ENCODE measurements at regions of chr5 and their contacts with region 1.

Region 1: GRCh38 chr5:168249923-168250322 is 41.5 kb upstream of the WWC1 start:
- DNase-seq: no peak
- ATAC-seq: no peak
- H3K4me3 Mint-ChIP-seq: no peak overlapping the region
- H3K27ac Mint-ChIP-seq: no peak overlapping the region
- H3K4me1 Mint-ChIP-seq: peaks cover 14% of the 10 kb centered on the region
- H3K27me3 Mint-ChIP-seq: peaks cover 2% of the 10 kb centered on the region

Region 2: DNA sequence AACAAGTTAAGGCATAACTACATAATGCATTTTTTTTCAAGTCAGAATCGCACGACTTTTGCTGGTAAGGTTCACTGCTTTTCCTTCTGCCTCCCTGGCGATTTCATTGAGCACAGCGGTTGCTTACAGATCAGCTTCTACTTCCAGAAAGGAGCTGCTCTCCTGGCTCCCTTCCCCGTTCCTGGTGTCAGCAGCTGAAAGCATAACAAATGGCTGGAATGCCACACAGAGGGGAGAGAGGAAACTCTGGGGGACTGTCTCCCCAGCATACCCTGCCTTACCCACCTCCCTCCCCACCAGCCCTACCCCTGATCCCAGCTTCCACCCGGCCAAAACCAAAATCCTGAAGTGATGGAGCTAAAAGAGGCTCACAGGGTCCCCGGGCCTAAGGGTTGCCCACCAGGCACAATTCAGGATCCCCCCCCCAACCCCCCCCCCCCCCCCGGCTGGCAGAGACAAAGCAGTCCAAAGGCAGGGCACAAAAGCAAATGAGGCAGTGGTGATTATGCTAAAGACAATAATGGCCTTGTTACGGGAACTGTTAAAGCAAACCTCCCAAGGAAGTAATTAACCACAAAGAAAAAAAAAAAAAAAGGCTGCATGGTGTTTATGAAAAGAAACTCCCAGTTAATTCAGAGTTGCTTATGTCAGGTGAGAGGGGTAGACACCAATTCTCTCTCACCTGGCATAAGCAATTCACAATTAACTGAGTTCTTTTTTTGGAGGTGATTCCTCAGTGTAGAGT is 84.5 kb before region 1 on chr5:
- CTCF ChIA-PET with region 1: no interaction called
- POLR2A ChIA-PET with region 1: no interaction called
- intact Hi-C with region 1: no loop called
- DNase-seq: no peak
- ATAC-seq: no peak
- H3K4me3 Mint-ChIP-seq: no peak overlapping the region
- H3K27ac Mint-ChIP-seq: no peak overlapping the region
- H3K4me1 Mint-ChIP-seq: peaks cover 10% of the 10 kb centered on the region
- H3K27me3 Mint-ChIP-seq: no peaks in the 10 kb centered on the region

Region 3: GRCh38 chr5:168227973-168228615 is 21.8 kb before region 1 on chr5:
- CTCF ChIA-PET with region 1: no interaction called
- POLR2A ChIA-PET with region 1: no interaction called
- intact Hi-C with region 1: loop called (anchors 1 kb)
- DNase-seq: peak; percentile 52
- ATAC-seq: peak; percentile 93
- H3K4me3 Mint-ChIP-seq: no peak overlapping the region
- H3K27ac Mint-ChIP-seq: peak overlapping the region; percentile 62
- H3K4me1 Mint-ChIP-seq: peaks cover 28% of the 10 kb centered on the region
- H3K27me3 Mint-ChIP-seq: peaks cover 5% of the 10 kb centered on the region

Region 4: DNA sequence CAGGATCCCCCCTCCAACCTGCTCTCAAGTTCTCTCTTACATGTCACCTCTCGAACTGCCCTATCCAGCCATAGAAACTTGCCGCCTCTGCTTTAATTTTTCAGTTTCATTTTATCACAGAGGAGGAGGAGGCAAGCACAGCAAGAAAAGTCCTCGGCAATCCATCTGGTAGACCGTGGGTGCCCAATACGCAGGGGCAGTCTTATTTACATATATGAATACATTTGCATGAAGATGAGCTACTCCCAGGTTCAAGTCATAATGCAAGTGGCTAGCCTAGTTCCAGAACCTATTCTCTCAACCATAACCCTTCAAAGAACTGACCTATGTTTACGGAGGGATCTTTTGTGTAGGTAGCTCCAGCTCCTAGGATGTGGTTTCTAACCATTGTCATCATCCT is 552.4 kb after region 1 on chr5:
- CTCF ChIA-PET with region 1: no interaction called
- POLR2A ChIA-PET with region 1: no interaction called
- intact Hi-C with region 1: loop called in 1 of 2 experiments (anchors 2 kb)
- DNase-seq: peak; percentile 68
- ATAC-seq: peak; percentile 60
- H3K4me3 Mint-ChIP-seq: peak overlapping the region; percentile 52
- H3K27ac Mint-ChIP-seq: peak overlapping the region; percentile 91
- H3K4me1 Mint-ChIP-seq: peaks cover 49% of the 10 kb centered on the region
- H3K27me3 Mint-ChIP-seq: peaks cover 13% of the 10 kb centered on the region